ENCODE measurements at regions of chr11 and their contacts with region 1.

Region 1: DNA sequence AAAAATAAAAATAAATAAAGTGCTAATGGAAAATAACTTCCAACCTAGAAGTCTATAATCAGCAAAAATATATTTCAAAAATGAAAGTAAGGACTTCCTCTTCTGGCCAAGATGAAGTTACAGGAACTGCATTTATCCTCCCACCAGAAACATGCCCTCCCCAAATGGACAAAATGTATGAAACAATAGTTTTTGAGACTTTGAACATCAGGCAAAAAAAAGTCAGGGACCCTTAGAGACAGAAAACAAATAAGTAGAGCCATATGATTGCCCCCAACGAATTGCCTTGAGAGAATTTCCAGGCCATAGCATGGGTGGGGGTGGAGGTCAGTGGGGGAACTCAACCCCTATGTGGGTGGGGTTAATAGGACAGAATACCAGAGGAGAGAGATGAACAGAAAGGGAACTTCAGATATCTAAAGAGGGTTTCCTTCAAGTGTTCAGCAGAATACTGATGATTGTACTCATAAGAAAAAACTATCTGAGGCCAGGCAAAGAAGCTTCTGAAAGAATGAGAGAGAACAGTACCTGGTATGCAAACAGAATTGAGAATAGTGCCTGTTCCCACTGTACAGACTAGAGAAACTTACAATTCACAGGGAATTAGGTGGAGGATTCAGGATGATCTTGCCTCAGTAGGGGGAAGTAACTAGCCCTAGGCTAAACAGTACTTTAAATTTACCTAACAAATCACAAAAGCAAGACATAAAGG is 26.6 kb upstream of the IL10RA start:
- DNase-seq: no peak
- H3K4me3 ChIP-seq: no peak overlapping the region
- H3K27ac ChIP-seq: no peak overlapping the region
- H3K4me1 ChIP-seq: no peaks in the 10 kb centered on the region
- H3K27me3 ChIP-seq: no peaks in the 10 kb centered on the region
- CTCF ChIP-seq: no peak

Region 2: DNA sequence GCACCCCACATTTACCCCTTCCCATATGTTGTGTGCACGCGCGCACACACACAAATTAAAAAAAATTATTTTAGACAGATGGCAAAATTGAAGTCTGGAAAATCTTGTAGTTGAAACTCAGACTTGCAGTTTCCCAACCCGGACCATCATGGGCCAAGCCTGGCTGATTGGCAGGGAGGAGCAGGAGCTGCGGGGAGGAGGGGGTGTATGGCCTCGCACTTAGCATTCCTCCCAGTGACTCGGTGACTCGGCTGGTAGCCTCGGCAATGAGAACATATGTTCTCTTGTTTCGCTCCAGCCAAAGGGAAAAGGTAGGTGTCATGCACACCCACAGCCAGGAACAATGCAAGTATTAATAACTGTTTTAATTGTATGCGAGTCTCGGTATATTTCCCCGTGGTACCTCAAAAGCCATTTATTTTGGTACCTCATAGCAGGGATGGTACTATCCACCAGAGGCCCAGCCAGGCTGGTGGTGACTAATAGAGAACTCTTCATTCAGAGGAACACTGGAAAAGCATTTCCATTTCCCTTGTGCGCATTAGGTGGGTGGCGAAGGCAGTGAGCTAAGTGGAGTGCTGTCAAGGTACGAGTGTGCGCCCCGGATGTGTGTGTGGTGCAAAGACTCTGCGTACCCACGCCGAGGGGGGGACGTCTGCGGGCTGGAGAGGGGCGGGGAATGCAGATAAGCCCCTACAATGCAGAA is 255.0 kb before region 1 on chr11:
- CTCF ChIA-PET with region 1: no interaction called
- dilution Hi-C with region 1: no loop called
- in situ Hi-C with region 1: no loop called
- intact Hi-C with region 1: no loop called
- DNase-seq: peak; percentile 3
- H3K4me3 ChIP-seq: no peak overlapping the region
- H3K27ac ChIP-seq: no peak overlapping the region
- H3K4me1 ChIP-seq: no peaks in the 10 kb centered on the region
- H3K27me3 ChIP-seq: no peaks in the 10 kb centered on the region
- CTCF ChIP-seq: no peak

Region 3: GRCh38 chr11:117932067-117932370 is 27.6 kb before region 1 on chr11:
- CTCF ChIA-PET with region 1: no interaction called
- dilution Hi-C with region 1: no loop called
- in situ Hi-C with region 1: no loop called
- intact Hi-C with region 1: no loop called
- DNase-seq: no peak
- H3K4me3 ChIP-seq: no peak overlapping the region
- H3K27ac ChIP-seq: no peak overlapping the region
- H3K4me1 ChIP-seq: no peaks in the 10 kb centered on the region
- H3K27me3 ChIP-seq: no peaks in the 10 kb centered on the region
- CTCF ChIP-seq: no peak

Region 4: GRCh38 chr11:117979481-117980211 is 20.1 kb after region 1 on chr11:
- CTCF ChIA-PET with region 1: interaction called, 12 read pairs
- dilution Hi-C with region 1: no loop called
- in situ Hi-C with region 1: no loop called
- intact Hi-C with region 1: no loop called
- DNase-seq: no peak
- H3K4me3 ChIP-seq: no peak overlapping the region
- H3K27ac ChIP-seq: no peak overlapping the region
- H3K4me1 ChIP-seq: no peaks in the 10 kb centered on the region
- H3K27me3 ChIP-seq: no peaks in the 10 kb centered on the region
- CTCF ChIP-seq: no peak